ENCODE measurements at regions of chr3 and their contacts with region 1.

Region 1: GRCh38 chr3:47324278-47324865 is 41.6 kb downstream of the KLHL18 start:
- DNase-seq: peak; percentile 67
- ATAC-seq: peak; percentile 71
- H3K4me3 ChIP-seq: no peak overlapping the region
- H3K4me3 Mint-ChIP-seq: no peak overlapping the region
- H3K27ac ChIP-seq: peak overlapping the region in 1 of 2 donors; percentile 31
- H3K27ac Mint-ChIP-seq: no peak overlapping the region
- H3K4me1 ChIP-seq: no peaks in the 10 kb centered on the region
- H3K4me1 Mint-ChIP-seq: peaks cover 5% of the 10 kb centered on the region
- H3K27me3 ChIP-seq: no peaks in the 10 kb centered on the region
- H3K27me3 Mint-ChIP-seq: no peaks in the 10 kb centered on the region
- CTCF ChIP-seq: peak; percentile 91

Region 2: DNA sequence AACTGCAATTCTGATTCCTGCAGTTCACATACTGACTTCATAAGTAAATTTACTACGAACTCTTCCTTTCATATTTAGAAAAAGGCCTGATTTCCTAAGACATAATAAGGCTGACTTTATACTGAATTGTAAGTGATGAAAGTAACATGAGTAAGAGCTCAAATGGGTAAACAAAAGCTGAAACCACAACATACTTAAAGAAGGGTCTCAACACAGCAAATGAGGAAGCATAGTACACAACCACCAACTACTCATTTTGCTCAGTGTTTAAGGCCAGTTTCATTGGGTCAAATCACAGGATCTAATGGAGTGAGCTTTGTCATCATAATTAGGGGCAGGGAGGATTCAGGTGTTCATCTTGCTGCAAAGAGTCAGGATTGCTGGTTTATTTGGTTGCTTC is 241.9 kb before region 1 on chr3:
- CTCF ChIA-PET with region 1: interaction called, 5 read pairs
- POLR2A ChIA-PET with region 1: no interaction called
- intact Hi-C with region 1: loop called (anchors 10 kb)
- DNase-seq: no peak
- ATAC-seq: no peak
- H3K4me3 ChIP-seq: peak overlapping the region in 1 of 5 experiments; percentile 9
- H3K4me3 Mint-ChIP-seq: peak overlapping the region; percentile 9
- H3K27ac ChIP-seq: peak overlapping the region in 1 of 2 donors; percentile 54
- H3K27ac Mint-ChIP-seq: peak overlapping the region; percentile 64
- H3K4me1 ChIP-seq: peaks cover 0 to 6% of the 10 kb centered on the region in 2 donors
- H3K4me1 Mint-ChIP-seq: peaks cover 17% of the 10 kb centered on the region
- H3K27me3 ChIP-seq: no peaks in the 10 kb centered on the region
- H3K27me3 Mint-ChIP-seq: no peaks in the 10 kb centered on the region
- CTCF ChIP-seq: no peak

Region 3: DNA sequence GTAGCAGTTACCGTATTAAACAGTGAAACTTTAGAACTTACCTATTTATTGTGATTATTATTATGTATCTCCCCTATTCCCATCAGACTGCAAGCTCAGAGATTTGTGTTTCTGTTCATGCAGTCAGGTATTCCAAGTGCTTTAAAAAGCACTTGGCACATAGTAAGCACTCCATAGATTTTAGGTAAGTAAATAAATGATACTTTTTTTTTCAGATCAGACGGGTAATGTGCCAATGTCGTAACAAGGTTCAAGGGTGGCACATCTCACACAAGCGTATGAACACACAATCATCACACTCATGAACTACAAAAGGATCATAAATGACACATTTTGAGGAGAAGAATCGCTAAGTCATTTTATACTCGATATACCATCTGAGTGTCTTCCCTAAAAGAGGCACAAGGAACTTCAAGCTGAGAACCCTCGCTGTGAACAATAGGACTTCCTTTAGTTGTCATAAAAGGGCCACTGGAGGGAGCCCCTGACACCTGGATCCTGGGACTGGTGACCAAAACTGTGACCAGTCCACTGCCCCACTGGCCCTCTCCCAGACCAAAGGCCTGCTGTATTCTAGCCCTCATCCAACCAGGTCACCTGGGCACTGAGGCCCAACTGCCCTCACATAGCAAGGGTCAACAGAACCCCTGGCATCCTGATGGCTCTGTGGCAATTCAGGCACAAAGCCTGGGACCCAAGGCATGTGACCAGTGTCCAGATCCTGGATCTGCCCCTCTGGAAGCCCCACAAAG is 73.9 kb before region 1 on chr3:
- CTCF ChIA-PET with region 1: interaction called, 12 read pairs
- POLR2A ChIA-PET with region 1: no interaction called
- intact Hi-C with region 1: no loop called
- DNase-seq: no peak
- ATAC-seq: no peak
- H3K4me3 ChIP-seq: no peak overlapping the region
- H3K4me3 Mint-ChIP-seq: no peak overlapping the region
- H3K27ac ChIP-seq: no peak overlapping the region
- H3K27ac Mint-ChIP-seq: no peak overlapping the region
- H3K4me1 ChIP-seq: no peaks in the 10 kb centered on the region
- H3K4me1 Mint-ChIP-seq: no peaks in the 10 kb centered on the region
- H3K27me3 ChIP-seq: no peaks in the 10 kb centered on the region
- H3K27me3 Mint-ChIP-seq: no peaks in the 10 kb centered on the region
- CTCF ChIP-seq: no peak

Region 4: GRCh38 chr3:47291158-47291753 is 33.1 kb before region 1 on chr3:
- CTCF ChIA-PET with region 1: interaction called, 16 read pairs
- POLR2A ChIA-PET with region 1: interaction called, 4 read pairs
- intact Hi-C with region 1: no loop called
- DNase-seq: no peak
- ATAC-seq: peak; percentile 37
- H3K4me3 ChIP-seq: peak overlapping the region in 1 of 5 experiments; percentile 11
- H3K4me3 Mint-ChIP-seq: peak overlapping the region; percentile 64
- H3K27ac ChIP-seq: peak overlapping the region; percentile 48 to 72
- H3K27ac Mint-ChIP-seq: peak overlapping the region; percentile 94
- H3K4me1 ChIP-seq: peaks cover 26 to 43% of the 10 kb centered on the region in 2 donors
- H3K4me1 Mint-ChIP-seq: peaks cover 78% of the 10 kb centered on the region
- H3K27me3 ChIP-seq: no peaks in the 10 kb centered on the region
- H3K27me3 Mint-ChIP-seq: no peaks in the 10 kb centered on the region
- CTCF ChIP-seq: no peak

Region 5: GRCh38 chr3:47485812-47486211 is 161.4 kb after region 1 on chr3:
- CTCF ChIA-PET with region 1: no interaction called
- POLR2A ChIA-PET with region 1: no interaction called
- intact Hi-C with region 1: no loop called
- DNase-seq: no peak
- ATAC-seq: no peak
- H3K4me3 ChIP-seq: no peak overlapping the region
- H3K4me3 Mint-ChIP-seq: no peak overlapping the region
- H3K27ac ChIP-seq: no peak overlapping the region
- H3K27ac Mint-ChIP-seq: no peak overlapping the region
- H3K4me1 ChIP-seq: peaks cover under 1 to 6% of the 10 kb centered on the region in 2 donors
- H3K4me1 Mint-ChIP-seq: peaks cover under 1% of the 10 kb centered on the region
- H3K27me3 ChIP-seq: no peaks in the 10 kb centered on the region
- H3K27me3 Mint-ChIP-seq: no peaks in the 10 kb centered on the region
- CTCF ChIP-seq: no peak